Activated CD4-positive, alpha-beta T cell treated with anti-CD3 and anti-CD28 coated beads for 36 hours (primary cell): ENCODE measurements at regions of chr20 and their contacts with region 1.

Region 1: DNA sequence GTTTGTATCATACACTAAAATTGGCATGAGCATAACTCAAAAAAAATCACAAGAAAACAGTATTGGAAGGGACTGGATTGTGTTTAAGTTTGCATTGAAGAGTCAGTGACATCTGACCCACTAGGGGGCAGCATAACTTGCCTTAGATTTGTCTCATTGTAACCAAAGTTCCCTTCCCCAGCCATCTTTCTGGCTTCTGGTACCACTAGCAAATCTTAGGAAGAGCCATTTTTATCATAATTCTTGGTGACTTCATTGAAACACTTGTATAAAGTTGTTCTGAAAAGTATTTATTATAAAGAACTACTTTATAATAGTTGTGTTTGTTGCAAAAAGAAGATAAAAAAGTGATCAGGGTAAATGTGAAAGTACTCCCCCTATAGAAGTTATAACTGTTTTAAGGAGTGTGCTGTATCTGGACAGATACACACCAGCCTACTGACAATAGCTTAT is 7.7 kb downstream of the CSTF1 start:
- DNase-seq: peak; percentile 74
- ATAC-seq: peak; percentile 70
- H3K4me3 Mint-ChIP-seq: no peak overlapping the region
- H3K27ac Mint-ChIP-seq: no peak overlapping the region
- H3K4me1 Mint-ChIP-seq: peaks cover 32% of the 10 kb centered on the region
- H3K27me3 Mint-ChIP-seq: no peaks in the 10 kb centered on the region

Region 2: GRCh38 chr20:55522296-55522815 is 877.8 kb before region 1 on chr20:
- CTCF ChIA-PET with region 1: no interaction called
- POLR2A ChIA-PET with region 1: no interaction called
- intact Hi-C with region 1: no loop called
- DNase-seq: no peak
- ATAC-seq: no peak
- H3K4me3 Mint-ChIP-seq: no peak overlapping the region
- H3K27ac Mint-ChIP-seq: no peak overlapping the region
- H3K4me1 Mint-ChIP-seq: no peaks in the 10 kb centered on the region
- H3K27me3 Mint-ChIP-seq: no peaks in the 10 kb centered on the region

Region 3: DNA sequence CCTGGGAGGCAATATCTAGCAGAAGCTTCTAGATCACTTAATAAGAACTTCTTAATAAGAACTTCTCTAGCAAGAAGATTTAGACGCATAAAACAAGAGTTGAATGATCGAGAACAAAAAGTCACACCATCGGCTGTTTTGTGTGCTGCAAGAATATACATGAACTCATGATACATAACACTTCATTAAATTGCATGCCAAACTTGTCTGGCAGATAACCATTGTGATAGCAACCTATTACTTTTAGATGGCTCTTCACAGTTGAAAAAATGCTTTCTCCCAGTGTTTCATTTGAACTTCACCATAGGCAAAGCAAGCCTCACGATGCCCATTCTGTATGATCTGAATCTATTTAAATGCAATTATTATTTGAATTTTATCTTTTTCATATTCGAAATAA is 644.7 kb before region 1 on chr20:
- CTCF ChIA-PET with region 1: no interaction called
- POLR2A ChIA-PET with region 1: no interaction called
- intact Hi-C with region 1: no loop called
- DNase-seq: no peak
- ATAC-seq: no peak
- H3K4me3 Mint-ChIP-seq: no peak overlapping the region
- H3K27ac Mint-ChIP-seq: no peak overlapping the region
- H3K4me1 Mint-ChIP-seq: no peaks in the 10 kb centered on the region
- H3K27me3 Mint-ChIP-seq: no peaks in the 10 kb centered on the region

Region 4: GRCh38 chr20:56358596-56359211 is 41.4 kb before region 1 on chr20 and contains the start of gene FAM210B:
- CTCF ChIA-PET with region 1: no interaction called
- POLR2A ChIA-PET with region 1: no interaction called
- intact Hi-C with region 1: no loop called
- DNase-seq: peak; percentile 90
- ATAC-seq: peak; percentile 100
- H3K4me3 Mint-ChIP-seq: peak within 1 kb of the TSS; percentile 82
- H3K27ac Mint-ChIP-seq: peak within 1 kb of the TSS; percentile 58
- H3K4me1 Mint-ChIP-seq: peaks cover 17% of the 10 kb centered on the region
- H3K27me3 Mint-ChIP-seq: no peaks in the 10 kb centered on the region
- total RNA-seq, gene FAM210B: 4.5 to 4.8 TPM

Region 5: DNA sequence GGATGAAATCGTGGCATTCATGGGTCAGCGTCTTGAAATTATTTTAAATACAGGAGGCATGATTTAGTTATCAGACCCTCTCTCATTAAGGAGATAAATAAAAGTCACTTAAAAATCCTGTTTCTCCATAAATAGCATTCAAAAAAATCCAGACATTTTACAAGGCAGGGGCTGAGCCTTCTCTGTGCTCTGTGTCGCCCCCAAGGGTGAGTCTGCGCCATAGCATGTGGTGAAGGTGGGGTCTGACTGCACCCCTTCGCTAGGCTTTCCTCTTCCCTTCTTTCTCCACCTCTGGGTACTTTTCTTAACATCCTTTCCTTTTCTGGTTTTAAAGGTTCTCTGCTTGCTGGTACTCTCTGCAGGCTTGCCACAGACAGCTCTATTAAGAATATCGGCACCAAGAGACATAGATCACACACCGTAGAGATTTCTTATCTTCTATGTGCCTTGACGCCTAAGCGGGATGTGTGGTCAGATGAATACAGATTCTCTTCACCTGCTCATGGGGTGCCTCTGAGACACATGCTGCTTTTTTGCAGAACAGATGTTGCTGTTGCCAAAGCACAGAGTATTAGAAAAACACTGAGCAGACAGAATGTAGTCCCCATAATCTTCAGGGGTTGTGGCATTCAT is 104.4 kb after region 1 on chr20:
- CTCF ChIA-PET with region 1: interaction called, 3 read pairs
- POLR2A ChIA-PET with region 1: no interaction called
- intact Hi-C with region 1: loop called in 1 of 2 experiments (anchors 1 kb)
- DNase-seq: peak; percentile 56
- ATAC-seq: peak; percentile 95
- H3K4me3 Mint-ChIP-seq: no peak overlapping the region
- H3K27ac Mint-ChIP-seq: peak overlapping the region; percentile 12
- H3K4me1 Mint-ChIP-seq: peaks cover 24% of the 10 kb centered on the region
- H3K27me3 Mint-ChIP-seq: no peaks in the 10 kb centered on the region

Region 6: DNA sequence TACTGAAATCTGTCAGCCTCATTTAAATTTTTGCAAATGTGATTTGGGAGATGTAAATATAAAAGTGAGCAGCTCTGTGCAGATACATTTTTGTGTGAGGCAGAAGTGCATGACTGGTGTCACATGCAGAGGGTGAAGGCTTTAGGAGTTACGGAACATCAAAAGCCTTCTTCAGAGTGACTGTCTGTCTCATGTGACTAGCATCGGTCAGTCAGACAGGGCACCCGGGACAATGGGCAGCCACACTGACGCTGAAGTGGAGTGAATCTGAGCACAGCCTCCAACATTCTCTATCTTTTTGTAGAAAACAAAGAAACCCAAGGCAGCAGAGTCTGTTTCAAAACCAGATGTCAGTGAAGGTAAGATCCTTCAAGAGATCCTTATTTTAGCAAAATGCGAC is 116.5 kb after region 1 on chr20:
- CTCF ChIA-PET with region 1: interaction called, 4 read pairs
- POLR2A ChIA-PET with region 1: no interaction called
- intact Hi-C with region 1: loop called (anchors 1 kb)
- DNase-seq: no peak
- ATAC-seq: no peak
- H3K4me3 Mint-ChIP-seq: no peak overlapping the region
- H3K27ac Mint-ChIP-seq: no peak overlapping the region
- H3K4me1 Mint-ChIP-seq: no peaks in the 10 kb centered on the region
- H3K27me3 Mint-ChIP-seq: no peaks in the 10 kb centered on the region

Region 7: DNA sequence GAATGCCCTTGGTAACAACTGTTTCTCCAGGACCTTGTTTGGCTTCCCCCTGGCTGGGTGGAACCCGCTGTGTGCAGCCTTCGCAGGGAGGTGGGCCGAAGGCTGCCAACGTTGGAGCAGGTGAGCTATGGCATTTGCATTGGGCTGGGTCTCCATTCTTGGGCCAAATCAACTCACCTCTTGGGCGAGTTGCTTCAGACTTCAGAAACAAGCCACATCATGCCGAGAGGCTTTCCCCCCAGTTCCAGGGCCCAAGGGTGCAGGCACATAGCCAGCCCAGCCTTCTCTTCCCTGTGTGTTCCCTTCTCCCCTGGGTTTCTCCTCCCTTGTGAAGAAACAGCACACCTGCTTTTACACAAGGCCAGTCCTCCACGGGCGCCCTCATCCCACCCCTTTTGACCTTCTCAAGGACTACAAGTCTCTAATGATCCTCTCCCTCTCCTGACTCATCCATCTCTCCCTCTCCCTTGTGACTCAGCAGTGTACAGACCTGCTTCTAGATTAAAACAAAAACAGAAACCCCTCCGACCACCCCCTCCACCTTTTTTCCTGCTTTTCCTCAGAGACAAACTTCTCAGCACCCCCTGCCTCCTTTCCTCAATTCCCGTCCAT is 174.5 kb after region 1 on chr20:
- CTCF ChIA-PET with region 1: no interaction called
- POLR2A ChIA-PET with region 1: no interaction called
- intact Hi-C with region 1: loop called in 1 of 2 experiments (anchors 1 kb)
- DNase-seq: no peak
- ATAC-seq: no peak
- H3K4me3 Mint-ChIP-seq: no peak overlapping the region
- H3K27ac Mint-ChIP-seq: no peak overlapping the region
- H3K4me1 Mint-ChIP-seq: no peaks in the 10 kb centered on the region
- H3K27me3 Mint-ChIP-seq: peaks cover 16% of the 10 kb centered on the region

Region 8: GRCh38 chr20:56801744-56802670 is 401.9 kb after region 1 on chr20:
- CTCF ChIA-PET with region 1: no interaction called
- POLR2A ChIA-PET with region 1: no interaction called
- intact Hi-C with region 1: no loop called
- DNase-seq: no peak
- ATAC-seq: no peak
- H3K4me3 Mint-ChIP-seq: no peak overlapping the region
- H3K27ac Mint-ChIP-seq: no peak overlapping the region
- H3K4me1 Mint-ChIP-seq: no peaks in the 10 kb centered on the region
- H3K27me3 Mint-ChIP-seq: peaks cover 11% of the 10 kb centered on the region